ENCODE measurements at regions of chr14 and their contacts with region 1.

Region 1: GRCh38 chr14:20989572-20990551 is at the start of gene METTL17:
- DNase-seq: peak; percentile 65 to 97
- H3K4me3 ChIP-seq: peak within 1 kb of the TSS; percentile 88 to 97
- H3K27ac ChIP-seq: peak within 1 kb of the TSS; percentile 88 to 94
- H3K4me1 ChIP-seq: peaks cover 27 to 38% of the 10 kb centered on the region in 2 donors
- H3K27me3 ChIP-seq: no peaks in the 10 kb centered on the region
- CTCF ChIP-seq: no peak
- total RNA-seq, gene METTL17: 38.8 TPM

Region 2: GRCh38 chr14:20332788-20333493 is 656.9 kb before region 1 on chr14 and contains the start of gene CCNB1IP1:
- intact Hi-C with region 1: loop called (anchors 5 kb)
- DNase-seq: peak; percentile 21 to 84
- H3K4me3 ChIP-seq: peak within 1 kb of the TSS; percentile 69 to 81
- H3K27ac ChIP-seq: peak within 1 kb of the TSS; percentile 87 to 94
- H3K4me1 ChIP-seq: peaks cover 0 to 11% of the 10 kb centered on the region in 2 donors
- H3K27me3 ChIP-seq: no peaks in the 10 kb centered on the region
- CTCF ChIP-seq: no peak
- total RNA-seq, gene CCNB1IP1: 12.6 TPM

Region 3: GRCh38 chr14:20365928-20366327 is 623.9 kb before region 1 on chr14:
- intact Hi-C with region 1: no loop called
- DNase-seq: no peak
- H3K4me3 ChIP-seq: no peak overlapping the region
- H3K27ac ChIP-seq: no peak overlapping the region
- H3K4me1 ChIP-seq: no peaks in the 10 kb centered on the region
- H3K27me3 ChIP-seq: no peaks in the 10 kb centered on the region
- CTCF ChIP-seq: no peak

Region 4: DNA sequence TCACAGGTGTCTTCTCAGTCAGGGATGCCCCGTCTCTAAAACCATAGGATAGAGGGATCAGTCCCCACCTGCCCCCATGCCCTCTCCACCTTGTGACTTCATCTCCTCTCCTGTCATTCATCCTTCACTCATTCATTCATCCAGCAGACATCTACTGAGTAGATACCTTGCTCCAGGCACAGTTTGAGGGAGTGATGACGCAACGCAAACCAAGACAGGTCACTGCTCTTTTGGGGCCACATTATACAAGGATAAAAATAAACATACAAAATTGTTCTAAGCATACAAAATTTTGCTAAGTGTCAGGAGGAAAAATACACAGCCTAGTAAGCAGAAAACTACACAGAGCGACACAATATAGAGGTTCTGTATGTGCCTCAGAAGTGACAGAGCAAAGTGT is 67.4 kb before region 1 on chr14:
- intact Hi-C with region 1: no loop called
- DNase-seq: no peak
- H3K4me3 ChIP-seq: no peak overlapping the region
- H3K27ac ChIP-seq: no peak overlapping the region
- H3K4me1 ChIP-seq: no peaks in the 10 kb centered on the region
- H3K27me3 ChIP-seq: peaks cover 1% of the 10 kb centered on the region
- CTCF ChIP-seq: no peak

Region 5: GRCh38 chr14:20970983-20971704 is 18.7 kb before region 1 on chr14:
- intact Hi-C with region 1: loop called (anchors 1 kb)
- DNase-seq: peak; percentile 39 to 90
- H3K4me3 ChIP-seq: peak overlapping the region; percentile 58 to 75
- H3K27ac ChIP-seq: peak overlapping the region; percentile 80 to 85
- H3K4me1 ChIP-seq: peaks cover 0 to 5% of the 10 kb centered on the region in 2 donors
- H3K27me3 ChIP-seq: no peaks in the 10 kb centered on the region
- CTCF ChIP-seq: peak; percentile 86 to 93 (median 88)

Region 6: DNA sequence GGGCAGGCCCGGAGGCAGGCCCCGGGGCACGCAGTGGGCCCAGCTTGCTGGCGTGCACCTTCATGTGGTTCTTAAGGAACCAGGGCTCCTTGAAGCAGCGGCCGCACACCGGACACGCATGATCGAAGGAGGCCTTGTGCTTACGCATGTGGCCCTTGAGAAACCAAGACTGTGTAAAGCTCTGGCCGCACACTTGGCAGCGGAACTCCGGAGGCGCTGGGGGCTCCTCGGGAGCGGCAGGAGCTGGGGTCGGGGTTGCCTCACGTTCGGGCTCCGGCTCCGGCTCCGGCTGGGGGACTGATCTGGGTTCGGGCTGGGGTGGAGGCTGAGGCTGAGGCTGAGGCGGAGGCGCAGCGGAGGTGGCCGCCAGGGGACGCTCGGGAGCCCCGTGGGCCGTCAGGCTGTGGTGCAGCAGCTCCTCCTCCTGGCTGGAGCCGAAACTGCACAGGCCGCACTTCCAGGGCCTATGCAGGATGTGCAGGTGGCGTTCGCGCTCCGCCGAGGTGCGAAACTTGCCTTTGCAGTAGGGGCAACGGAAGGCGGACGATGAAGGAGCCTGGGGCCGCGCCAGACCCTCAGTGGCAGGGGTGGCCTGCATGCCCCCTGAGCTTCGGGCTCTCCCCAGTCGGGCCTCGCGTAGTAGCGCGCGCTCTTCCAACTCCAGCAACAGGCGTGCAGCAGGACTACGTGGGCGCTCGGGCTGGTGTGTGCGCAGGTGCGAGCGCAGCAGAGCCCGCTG is 102.6 kb after region 1 on chr14:
- intact Hi-C with region 1: loop called (anchors 5 kb)
- DNase-seq: peak in 1 of 2 donors; percentile 86
- H3K4me3 ChIP-seq: no peak overlapping the region
- H3K27ac ChIP-seq: peak overlapping the region in 1 of 2 donors; percentile 36
- H3K4me1 ChIP-seq: peaks cover 0 to 8% of the 10 kb centered on the region in 2 donors
- H3K27me3 ChIP-seq: no peaks in the 10 kb centered on the region
- CTCF ChIP-seq: peak; percentile 100

Region 7: DNA sequence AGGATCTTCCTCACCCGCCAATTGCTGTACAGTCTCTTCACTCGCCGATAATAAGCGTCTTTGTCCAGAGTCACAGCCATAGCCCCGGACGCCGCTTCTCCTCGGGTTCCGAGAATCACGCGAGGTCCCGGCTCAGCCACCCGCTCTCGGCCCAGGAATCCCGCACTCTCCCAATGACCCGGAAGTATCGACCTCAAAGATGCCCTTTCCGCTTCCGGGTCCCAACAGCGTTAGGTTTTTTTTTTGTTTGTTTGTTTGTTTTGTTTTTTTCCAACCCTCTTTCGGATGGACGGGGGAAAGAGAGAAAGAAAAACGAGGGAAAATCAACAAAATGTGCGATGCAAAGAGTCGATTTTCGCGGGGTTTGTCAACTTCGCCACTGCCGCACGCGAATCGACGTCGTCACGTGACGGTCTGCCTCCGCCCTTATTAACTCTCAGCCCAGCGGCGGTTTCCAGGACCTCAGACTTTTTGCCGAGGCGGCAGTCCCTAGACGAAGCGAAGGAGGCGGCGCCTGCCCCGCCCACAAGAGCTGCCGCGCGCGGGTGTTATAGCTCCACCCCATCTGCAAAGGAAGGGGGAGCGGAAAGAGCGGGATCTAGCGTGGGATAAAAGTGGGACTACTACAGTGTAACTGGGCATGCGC is 394.1 kb after region 1 on chr14 and contains the start of gene SUPT16H:
- intact Hi-C with region 1: loop called (anchors 1 kb)
- DNase-seq: peak; percentile 89 to 98
- H3K4me3 ChIP-seq: peak within 1 kb of the TSS; percentile 63 to 79
- H3K27ac ChIP-seq: peak within 1 kb of the TSS; percentile 88 to 90
- H3K4me1 ChIP-seq: peaks cover 0 to 16% of the 10 kb centered on the region in 2 donors
- H3K27me3 ChIP-seq: no peaks in the 10 kb centered on the region
- CTCF ChIP-seq: no peak
- total RNA-seq, gene SUPT16H: 13.5 TPM